ENCODE measurements at regions of chr6 and their contacts with region 1.

Region 1: DNA sequence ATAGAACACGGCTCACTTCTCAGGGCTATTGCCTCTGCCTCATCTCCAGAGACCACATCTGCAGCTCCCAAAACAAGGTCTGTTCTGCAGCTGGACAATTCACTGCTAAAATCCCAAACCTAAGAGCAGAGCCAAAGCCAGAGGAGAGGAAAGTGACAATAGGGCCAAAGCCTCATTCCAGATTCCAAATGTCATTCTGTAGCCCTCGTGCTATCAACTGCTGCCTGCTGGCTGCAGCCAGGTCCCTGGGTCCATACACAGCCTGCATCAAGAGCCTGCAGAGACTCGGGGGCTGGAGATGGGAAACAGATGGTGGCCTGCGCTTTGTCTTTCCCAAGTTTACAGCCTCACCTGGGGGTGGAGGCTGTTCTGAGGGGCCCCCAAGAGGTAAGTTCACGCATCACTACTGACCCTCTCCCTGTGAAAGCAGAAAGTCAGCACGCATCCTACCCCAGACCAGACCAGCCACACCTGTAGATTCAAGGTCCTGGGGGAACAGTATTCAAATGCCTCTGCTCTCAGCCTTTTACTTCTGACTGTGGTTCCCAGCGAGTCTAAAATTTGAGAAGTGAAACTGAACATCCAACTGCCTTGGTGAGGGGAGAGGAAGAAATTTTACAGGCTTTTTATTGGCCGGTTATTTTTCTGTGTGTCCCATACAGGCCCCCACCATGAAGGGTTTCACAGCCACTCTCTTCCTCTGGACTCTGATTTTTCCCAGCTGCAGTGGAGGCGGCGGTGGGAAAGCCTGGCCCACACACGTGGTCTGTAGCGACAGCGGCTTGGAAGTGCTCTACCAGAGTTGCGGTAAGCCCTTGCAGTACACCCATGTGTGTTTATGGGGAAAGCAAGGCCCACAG is at the start of gene LY86:
- DNase-seq: peak; percentile 56
- ATAC-seq: peak; percentile 65
- H3K4me3 Mint-ChIP-seq: peak within 1 kb of the TSS; percentile 96
- H3K27ac Mint-ChIP-seq: peak within 1 kb of the TSS; percentile 98
- H3K4me1 Mint-ChIP-seq: peaks cover 95% of the 10 kb centered on the region
- H3K27me3 Mint-ChIP-seq: no peaks in the 10 kb centered on the region
- CTCF ChIP-seq: no peak
- total RNA-seq, gene LY86: 57.6 and 58.1 TPM in 2 replicates

Region 2: DNA sequence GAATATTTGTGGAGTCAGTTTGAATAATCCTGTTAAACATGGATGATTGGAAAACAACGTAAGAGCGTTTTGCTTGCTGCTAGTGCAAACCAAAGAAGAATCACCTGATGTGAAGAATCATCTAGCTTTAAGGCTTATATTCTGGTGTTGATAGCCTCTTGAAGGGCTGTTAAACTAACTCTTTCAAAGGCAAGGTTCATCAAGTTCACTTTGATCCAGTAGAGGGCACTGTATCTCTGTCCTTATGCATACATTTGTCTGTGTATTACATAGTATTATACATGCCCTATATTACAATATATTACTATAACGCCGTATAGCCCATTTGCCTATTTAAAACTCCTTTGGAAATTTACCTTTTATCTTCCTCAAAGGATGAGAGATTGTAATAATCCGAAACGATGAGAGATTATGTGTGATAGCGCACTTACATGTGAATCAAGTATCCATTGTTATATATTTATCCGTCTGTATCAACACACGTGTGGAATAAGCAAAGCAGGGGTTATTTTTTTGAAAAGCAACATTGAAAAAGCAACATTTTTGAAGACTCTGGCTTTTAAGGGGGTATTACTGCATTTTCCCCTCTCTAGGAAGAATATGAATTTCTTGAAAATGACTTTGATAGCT is 530.8 kb before region 1 on chr6:
- CTCF ChIA-PET with region 1: interaction called, 3 read pairs
- POLR2A ChIA-PET with region 1: no interaction called
- intact Hi-C with region 1: loop called (anchors 1 kb)
- DNase-seq: no peak
- ATAC-seq: peak; percentile 66
- H3K4me3 Mint-ChIP-seq: no peak overlapping the region
- H3K27ac Mint-ChIP-seq: no peak overlapping the region
- H3K4me1 Mint-ChIP-seq: no peaks in the 10 kb centered on the region
- H3K27me3 Mint-ChIP-seq: peaks cover 37% of the 10 kb centered on the region
- CTCF ChIP-seq: peak; percentile 42

Region 3: GRCh38 chr6:6407071-6407741 is 181.1 kb before region 1 on chr6:
- CTCF ChIA-PET with region 1: no interaction called
- POLR2A ChIA-PET with region 1: interaction called, 3 read pairs
- intact Hi-C with region 1: loop called (anchors 1 kb)
- DNase-seq: no peak
- ATAC-seq: peak; percentile 79
- H3K4me3 Mint-ChIP-seq: no peak overlapping the region
- H3K27ac Mint-ChIP-seq: no peak overlapping the region
- H3K4me1 Mint-ChIP-seq: peaks cover 13% of the 10 kb centered on the region
- H3K27me3 Mint-ChIP-seq: peaks cover 16% of the 10 kb centered on the region
- CTCF ChIP-seq: no peak

Region 4: DNA sequence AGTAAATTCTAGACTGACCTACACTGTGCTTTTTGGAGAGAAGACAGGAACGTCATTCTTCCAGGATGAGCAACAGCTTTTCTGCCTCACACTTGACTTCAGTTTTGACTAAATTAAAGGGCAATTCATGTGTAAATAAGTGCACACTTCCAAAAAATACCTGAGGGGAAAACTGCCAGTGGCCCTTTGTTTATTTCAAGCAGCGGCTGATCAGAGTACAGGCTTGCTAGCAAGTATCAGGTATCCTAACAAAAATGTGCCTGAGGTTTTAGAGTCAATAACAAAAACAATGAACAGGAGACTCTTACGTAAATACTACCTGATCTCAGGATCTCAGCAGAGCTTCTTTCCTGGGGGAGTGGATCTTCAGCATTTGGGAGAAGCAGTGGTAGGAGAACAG is 12.6 kb after region 1 on chr6:
- CTCF ChIA-PET with region 1: interaction called, 3 read pairs
- POLR2A ChIA-PET with region 1: interaction called, 4 read pairs
- intact Hi-C with region 1: loop called (anchors 1 kb)
- DNase-seq: no peak
- ATAC-seq: no peak
- H3K4me3 Mint-ChIP-seq: no peak overlapping the region
- H3K27ac Mint-ChIP-seq: peak overlapping the region; percentile 20
- H3K4me1 Mint-ChIP-seq: peaks cover 59% of the 10 kb centered on the region
- H3K27me3 Mint-ChIP-seq: no peaks in the 10 kb centered on the region
- CTCF ChIP-seq: no peak

Region 5: DNA sequence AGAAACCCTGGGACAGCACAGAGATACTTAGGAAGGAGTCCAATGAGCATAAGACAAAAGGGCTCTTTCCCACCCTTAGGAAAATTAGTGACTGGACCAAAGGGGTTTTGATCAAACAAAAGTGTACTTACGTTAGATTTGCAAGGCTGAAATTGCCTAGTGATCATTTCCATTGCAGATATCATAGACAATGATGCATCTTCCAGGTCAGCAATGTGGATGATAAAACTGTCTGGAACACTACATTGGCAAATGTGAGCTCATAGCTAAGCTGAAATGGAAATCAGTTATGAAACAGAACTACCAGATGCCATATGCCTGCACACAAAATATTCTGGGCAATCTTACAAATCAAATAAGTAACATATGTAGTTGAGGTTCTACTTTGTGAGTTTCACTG is 34.2 kb after region 1 on chr6:
- CTCF ChIA-PET with region 1: no interaction called
- POLR2A ChIA-PET with region 1: interaction called, 18 read pairs
- intact Hi-C with region 1: loop called (anchors 5 kb)
- DNase-seq: no peak
- ATAC-seq: no peak
- H3K4me3 Mint-ChIP-seq: no peak overlapping the region
- H3K27ac Mint-ChIP-seq: no peak overlapping the region
- H3K4me1 Mint-ChIP-seq: peaks cover 56% of the 10 kb centered on the region
- H3K27me3 Mint-ChIP-seq: no peaks in the 10 kb centered on the region
- CTCF ChIP-seq: no peak

Region 6: DNA sequence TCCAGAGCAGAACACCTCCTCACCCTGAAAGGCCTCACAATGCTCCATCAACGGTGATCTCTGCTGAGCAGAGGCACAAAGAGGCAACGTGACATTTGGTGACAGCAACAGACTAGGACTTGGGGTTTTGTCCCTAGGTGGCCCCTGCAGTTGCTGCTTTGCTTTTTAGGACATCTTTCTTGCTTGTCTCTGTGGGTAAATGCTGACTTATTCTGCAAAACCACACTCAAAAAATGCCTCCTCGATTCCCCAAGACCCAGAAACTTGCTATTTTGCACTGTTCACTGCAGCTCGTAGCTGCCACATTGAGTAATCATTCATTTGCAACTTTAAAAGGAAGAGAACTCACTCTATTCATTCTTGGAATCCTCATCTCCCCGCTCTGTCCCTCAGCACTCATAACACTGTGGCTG is 210.2 kb after region 1 on chr6:
- CTCF ChIA-PET with region 1: no interaction called
- POLR2A ChIA-PET with region 1: no interaction called
- intact Hi-C with region 1: loop called (anchors 5 kb)
- DNase-seq: no peak
- ATAC-seq: no peak
- H3K4me3 Mint-ChIP-seq: no peak overlapping the region
- H3K27ac Mint-ChIP-seq: peak overlapping the region; percentile 37
- H3K4me1 Mint-ChIP-seq: peaks cover 64% of the 10 kb centered on the region
- H3K27me3 Mint-ChIP-seq: peaks cover 2% of the 10 kb centered on the region
- CTCF ChIP-seq: no peak

Measured in activated B cell treated with CpG ODN at 0.5 μM for 24 hours (primary cell).